ENCODE measurements at regions of chr2 and their contacts with region 1.

Region 1: DNA sequence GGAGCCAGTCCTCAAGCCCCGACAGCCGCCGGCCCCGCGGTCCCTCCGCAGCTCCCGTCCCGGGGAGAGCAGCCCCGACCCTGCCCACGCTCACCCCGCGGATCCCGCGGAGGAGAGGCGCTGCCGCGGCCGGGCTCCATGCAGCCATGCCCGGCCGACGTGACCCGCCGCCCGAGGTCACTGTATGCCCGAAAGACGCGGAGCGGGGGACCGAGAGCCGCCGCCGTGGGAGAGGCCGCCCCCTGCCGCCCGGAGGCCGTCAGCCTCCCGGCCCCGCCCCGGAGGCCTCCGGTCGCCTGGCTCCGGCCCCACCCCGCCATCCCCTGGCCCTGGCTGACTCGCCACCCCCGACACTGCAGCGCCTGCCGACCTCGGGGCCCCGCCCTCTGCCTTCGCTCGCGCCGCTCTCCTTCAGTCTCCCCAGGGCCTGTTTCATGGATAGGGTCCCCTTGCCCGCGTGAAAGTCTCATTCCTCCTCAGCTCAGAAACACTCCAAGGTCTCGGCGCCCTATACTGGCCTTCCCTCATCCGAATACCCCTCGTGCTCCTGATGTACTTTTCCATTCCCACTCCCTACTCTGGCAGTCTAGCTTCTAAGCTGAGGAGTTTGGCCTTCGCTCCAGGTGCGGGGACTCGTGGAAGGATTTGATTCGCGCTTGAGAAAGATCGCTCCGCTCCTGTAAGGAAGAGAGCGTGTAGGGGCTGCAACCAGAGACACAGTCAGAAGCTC is at the start of gene BOLA3:
- DNase-seq: peak; percentile 55 to 93 (median 70)
- ATAC-seq: peak; percentile 95
- H3K4me3 ChIP-seq: peak within 1 kb of the TSS; percentile 72
- H3K4me3 Mint-ChIP-seq: no peak within 1 kb of the TSS
- H3K27ac ChIP-seq: peak within 1 kb of the TSS; percentile 72
- H3K27ac Mint-ChIP-seq: no peak within 1 kb of the TSS
- H3K4me1 ChIP-seq: peaks cover 14 to 15% of the 10 kb centered on the region in 2 donors
- H3K4me1 Mint-ChIP-seq: peaks cover 0 to 15% (median 0%) of the 10 kb centered on the region in 7 donors
- H3K27me3 ChIP-seq: no peaks in the 10 kb centered on the region
- H3K27me3 Mint-ChIP-seq: no peaks in the 10 kb centered on the region
- total RNA-seq, gene BOLA3: 6.9 to 54.8 (median 13.7) TPM

Region 2: DNA sequence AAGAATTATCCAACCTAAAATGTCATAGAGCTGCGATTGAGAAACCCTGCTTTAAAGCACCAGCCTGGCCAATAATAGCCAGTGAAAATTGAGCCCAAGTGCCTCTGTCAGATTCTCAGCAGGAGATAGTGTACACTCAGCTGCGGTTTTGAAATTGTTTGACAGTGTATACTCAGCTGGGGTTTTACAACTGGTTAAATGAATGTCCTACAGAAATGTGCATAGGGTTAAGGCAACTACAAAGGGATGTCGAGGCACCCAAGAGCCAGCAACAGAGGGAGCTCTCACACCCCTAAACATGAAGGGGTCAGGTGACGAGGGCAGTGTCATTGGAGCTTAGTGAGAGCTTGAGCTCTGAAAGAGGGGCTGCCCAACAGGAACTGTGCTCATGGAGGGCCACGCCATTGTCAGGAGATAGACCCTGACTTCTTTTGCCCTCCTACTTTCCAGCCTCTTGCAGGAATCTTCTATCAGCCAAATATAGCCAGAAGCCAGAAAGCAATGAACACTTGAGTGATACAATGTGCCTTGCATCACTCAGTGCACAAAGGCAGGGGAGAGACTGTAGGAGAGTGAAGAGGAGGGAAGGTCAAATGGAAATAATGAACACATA is 239.9 kb before region 1 on chr2:
- CTCF ChIA-PET with region 1: interaction called, 9 read pairs
- POLR2A ChIA-PET with region 1: no interaction called
- intact Hi-C with region 1: loop called (anchors 1 kb)
- DNase-seq: peak in 8 of 9 donors; percentile 37 to 64 (median 48)
- ATAC-seq: peak; percentile 92
- H3K4me3 ChIP-seq: no peak overlapping the region
- H3K4me3 Mint-ChIP-seq: no peak overlapping the region
- H3K27ac ChIP-seq: no peak overlapping the region
- H3K27ac Mint-ChIP-seq: peak overlapping the region in 4 of 9 donors; percentile 19 to 61 (median 40)
- H3K4me1 ChIP-seq: no peaks in the 10 kb centered on the region
- H3K4me1 Mint-ChIP-seq: peaks cover 0 to 3% (median 0%) of the 10 kb centered on the region in 7 donors
- H3K27me3 ChIP-seq: no peaks in the 10 kb centered on the region
- H3K27me3 Mint-ChIP-seq: no peaks in the 10 kb centered on the region

Region 3: GRCh38 chr2:74026687-74027241 is 121.1 kb before region 1 on chr2:
- CTCF ChIA-PET with region 1: no interaction called
- POLR2A ChIA-PET with region 1: no interaction called
- intact Hi-C with region 1: no loop called
- DNase-seq: peak in 6 of 9 donors; percentile 18 to 40 (median 30)
- ATAC-seq: peak; percentile 49
- H3K4me3 ChIP-seq: peak overlapping the region; percentile 16
- H3K4me3 Mint-ChIP-seq: peak overlapping the region; percentile 65 to 91 (median 76)
- H3K27ac ChIP-seq: peak overlapping the region; percentile 57
- H3K27ac Mint-ChIP-seq: peak overlapping the region; percentile 30 to 96 (median 83)
- H3K4me1 ChIP-seq: peaks cover 16 to 55% of the 10 kb centered on the region in 2 donors
- H3K4me1 Mint-ChIP-seq: peaks cover 53 to 88% (median 71%) of the 10 kb centered on the region in 7 donors
- H3K27me3 ChIP-seq: no peaks in the 10 kb centered on the region
- H3K27me3 Mint-ChIP-seq: no peaks in the 10 kb centered on the region

Region 4: GRCh38 chr2:74119912-74120825 is 27.7 kb before region 1 on chr2:
- CTCF ChIA-PET with region 1: interaction called, 10 read pairs
- POLR2A ChIA-PET with region 1: interaction called, 6 read pairs
- intact Hi-C with region 1: loop called (anchors 1 kb)
- DNase-seq: peak; percentile 69 to 91 (median 80)
- ATAC-seq: peak; percentile 98
- H3K4me3 ChIP-seq: peak overlapping the region; percentile 89
- H3K4me3 Mint-ChIP-seq: peak overlapping the region; percentile 82 to 92 (median 88)
- H3K27ac ChIP-seq: peak overlapping the region; percentile 83
- H3K27ac Mint-ChIP-seq: peak overlapping the region; percentile 79 to 96 (median 91)
- H3K4me1 ChIP-seq: no peaks in the 10 kb centered on the region
- H3K4me1 Mint-ChIP-seq: peaks cover 8 to 12% (median 9%) of the 10 kb centered on the region in 7 donors
- H3K27me3 ChIP-seq: no peaks in the 10 kb centered on the region
- H3K27me3 Mint-ChIP-seq: peaks cover 0 to 5% (median 2%) of the 10 kb centered on the region in 5 donors

Measured in naive thymus-derived CD4-positive, alpha-beta T cell (primary cell).